ENCODE measurements at regions of chr10 and their contacts with region 1.

Region 1: DNA sequence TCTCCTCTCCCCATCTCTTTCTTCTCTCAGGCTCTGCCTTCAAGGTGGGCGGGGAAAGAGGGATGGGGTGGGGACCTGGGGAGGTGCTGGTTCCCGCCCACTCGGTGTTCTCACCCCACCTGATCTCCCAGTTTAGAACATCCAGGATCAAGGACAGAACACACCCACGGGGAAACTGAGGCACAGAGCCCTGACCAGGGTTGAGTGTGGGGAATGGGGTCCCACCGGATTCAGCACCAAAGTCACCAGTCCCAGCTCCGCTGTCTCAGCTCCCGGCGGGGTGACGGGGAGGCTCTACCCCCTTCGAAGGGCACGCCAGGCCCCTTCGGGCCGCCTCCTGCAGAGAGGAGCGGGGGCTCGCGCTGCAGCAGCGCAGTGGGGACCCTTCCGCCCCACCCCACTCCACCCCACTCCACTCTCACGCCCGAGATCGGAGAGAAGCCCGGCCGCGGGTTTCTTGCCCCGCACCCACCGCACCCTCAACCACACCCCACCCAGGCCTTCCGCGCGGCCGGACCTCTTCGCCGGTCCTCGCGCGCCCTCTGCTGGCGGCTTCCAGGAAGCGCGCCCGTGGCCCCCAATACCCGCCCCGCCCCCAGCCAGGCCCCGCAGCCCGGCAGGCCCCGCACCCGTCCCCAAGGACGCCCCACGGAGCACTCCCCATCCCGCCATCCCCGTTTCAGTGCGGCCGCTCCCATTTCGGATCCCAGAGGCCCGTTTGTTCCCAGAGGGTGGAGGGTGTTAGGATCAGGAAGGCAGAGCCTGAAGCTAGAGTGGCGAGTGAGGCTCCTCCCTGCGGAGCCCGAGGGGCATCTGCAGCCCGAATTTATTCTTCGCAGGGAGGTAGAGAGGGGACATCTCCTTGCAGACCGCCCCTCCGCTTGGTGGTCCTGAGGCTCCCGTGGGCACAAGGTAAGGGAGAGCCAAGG is 18.0 kb downstream of the POLL start:
- DNase-seq: peak; percentile 64 to 77
- H3K4me3 ChIP-seq: peak overlapping the region; percentile 31 to 34
- H3K27ac ChIP-seq: no peak overlapping the region
- H3K4me1 ChIP-seq: peaks cover 0 to 15% of the 10 kb centered on the region in 2 donors
- H3K27me3 ChIP-seq: peaks cover 16 to 32% of the 10 kb centered on the region in 2 donors
- CTCF ChIP-seq: peak; percentile 84 to 98 (median 88)
- POLR2A ChIP-seq: no peak

Region 2: DNA sequence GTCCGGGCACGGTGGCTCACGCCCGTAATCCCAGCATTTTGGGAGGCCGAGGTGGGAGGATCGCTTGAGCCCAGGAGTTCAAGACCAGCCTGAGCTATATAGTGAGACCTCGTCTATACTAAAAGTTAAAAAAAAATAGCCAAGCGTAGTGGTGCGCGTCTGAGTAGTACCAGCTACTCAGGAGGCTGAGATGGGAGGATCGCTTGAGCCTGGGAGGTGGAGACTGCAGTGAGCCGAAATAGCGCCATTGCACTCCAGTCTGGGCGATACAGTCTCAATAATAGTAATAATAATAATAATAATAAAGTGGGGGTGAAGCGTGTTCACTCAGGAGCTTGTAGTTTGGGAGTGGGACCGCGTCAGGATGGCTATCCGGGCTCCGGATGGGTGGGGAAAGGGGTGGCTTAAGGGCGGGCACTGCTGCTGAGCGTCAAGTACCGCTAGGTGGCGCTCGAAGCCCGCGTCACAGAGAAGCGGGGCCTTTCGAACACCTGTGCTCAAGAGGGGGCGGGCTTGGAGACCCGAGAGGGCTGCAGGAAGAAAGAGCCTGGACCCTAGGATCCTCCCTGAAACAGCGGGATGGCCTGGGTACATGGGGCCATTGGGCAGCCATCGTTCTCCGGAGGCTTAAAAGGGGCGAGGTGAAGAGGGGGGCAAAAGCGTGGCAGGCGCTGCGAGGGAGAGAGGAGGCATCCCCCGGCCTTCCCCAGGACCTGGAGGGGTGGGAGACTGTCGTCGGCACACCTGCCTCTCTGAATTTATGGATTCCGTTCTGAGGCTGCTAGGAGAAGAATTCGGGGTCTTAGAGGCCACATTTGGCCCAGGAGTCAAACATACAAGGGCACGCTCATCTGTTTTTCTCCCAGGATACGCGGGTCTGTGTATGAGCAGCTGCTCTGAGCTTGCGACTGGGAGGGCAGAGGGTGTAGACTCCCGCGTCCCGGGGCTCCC is 355.4 kb before region 1 on chr10:
- intact Hi-C with region 1: loop called (anchors 5 kb)
- DNase-seq: peak; percentile 35 to 59
- H3K4me3 ChIP-seq: no peak overlapping the region
- H3K27ac ChIP-seq: no peak overlapping the region
- H3K4me1 ChIP-seq: peaks cover 0 to 11% of the 10 kb centered on the region in 2 donors
- H3K27me3 ChIP-seq: peaks cover 19 to 66% of the 10 kb centered on the region in 2 donors
- CTCF ChIP-seq: peak; percentile 60 to 86 (median 73)
- POLR2A ChIP-seq: no peak

Region 3: GRCh38 chr10:101485681-101486554 is 84.2 kb before region 1 on chr10:
- intact Hi-C with region 1: no loop called
- DNase-seq: peak; percentile 33 to 57
- H3K4me3 ChIP-seq: no peak overlapping the region
- H3K27ac ChIP-seq: no peak overlapping the region
- H3K4me1 ChIP-seq: no peaks in the 10 kb centered on the region
- H3K27me3 ChIP-seq: no peaks in the 10 kb centered on the region
- CTCF ChIP-seq: no peak
- POLR2A ChIP-seq: no peak

Measured in uterus (tissue), 4 donors.